Posterior cingulate gyrus (tissue), 11 donors: ENCODE measurements at regions of chr17 and their contacts with region 1.

Region 1: DNA sequence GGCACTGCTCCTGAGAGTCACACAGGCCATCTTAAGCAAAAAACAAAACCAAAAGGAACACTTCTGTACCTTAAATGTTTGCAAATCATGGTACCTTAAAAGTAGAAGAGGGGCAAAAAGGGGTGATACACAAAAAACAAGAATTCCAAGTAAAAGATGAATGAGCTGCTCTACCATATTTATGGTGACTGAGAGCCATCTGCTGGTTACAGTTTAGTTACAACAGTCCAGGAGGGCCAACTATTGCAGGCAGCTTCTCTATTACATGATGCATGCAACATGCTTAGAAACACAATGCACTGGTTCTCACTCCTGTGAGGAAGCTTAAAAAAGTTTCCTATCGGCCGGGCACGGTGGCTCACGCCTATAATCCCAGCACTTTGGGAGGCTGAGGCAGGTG is 53.5 kb downstream of the STX8 start:
- DNase-seq: peak in 1 of 10 donors; percentile 21

Region 2: GRCh38 chr17:8991514-8992285 is 530.4 kb before region 1 on chr17:
- intact Hi-C with region 1: loop called (anchors 1 kb)
- DNase-seq: peak in 7 of 10 donors; percentile 34 to 87 (median 64)

Region 3: GRCh38 chr17:9109933-9110332 is 412.1 kb before region 1 on chr17:
- intact Hi-C with region 1: loop called (anchors 5 kb)
- DNase-seq: peak in 1 of 10 donors; percentile 3

Region 4: GRCh38 chr17:9498490-9498889 is 23.6 kb before region 1 on chr17:
- intact Hi-C with region 1: no loop called
- DNase-seq: no peak